Left colon (tissue), 2 donors: ENCODE measurements at regions of chr2 and their contacts with region 1.

Region 1: GRCh38 chr2:56132138-56132537 is 51.7 kb upstream of the CCDC85A start:
- DNase-seq: no peak
- ATAC-seq: no peak

Region 2: GRCh38 chr2:55771612-55772011 is 360.5 kb before region 1 on chr2:
- intact Hi-C with region 1: loop called in 1 of 2 experiments (anchors 10 kb)
- DNase-seq: no peak
- ATAC-seq: peak; percentile 45

Region 3: DNA sequence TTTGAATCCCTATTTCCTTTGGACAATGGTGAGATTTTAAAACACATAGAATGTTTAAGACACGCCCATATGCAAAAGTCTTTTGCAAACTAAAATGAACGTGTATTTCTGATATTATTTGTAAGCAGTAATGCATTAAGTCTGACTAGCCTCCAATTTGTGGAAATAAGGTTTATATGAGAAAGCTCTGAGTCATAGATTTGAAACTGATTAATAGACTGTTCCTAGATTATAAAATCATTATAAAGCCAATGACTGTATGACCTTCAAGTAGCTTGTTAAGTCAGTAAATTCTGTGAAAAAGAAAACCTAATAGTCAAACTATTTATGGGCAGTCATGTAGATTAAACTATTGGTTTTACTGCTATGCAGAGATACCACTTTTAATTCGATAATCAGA is 195.8 kb before region 1 on chr2:
- intact Hi-C with region 1: no loop called
- DNase-seq: no peak
- ATAC-seq: no peak